CD4-positive, alpha-beta memory T cell (primary cell): ENCODE measurements at regions of chr9 and their contacts with region 1.

Region 1: DNA sequence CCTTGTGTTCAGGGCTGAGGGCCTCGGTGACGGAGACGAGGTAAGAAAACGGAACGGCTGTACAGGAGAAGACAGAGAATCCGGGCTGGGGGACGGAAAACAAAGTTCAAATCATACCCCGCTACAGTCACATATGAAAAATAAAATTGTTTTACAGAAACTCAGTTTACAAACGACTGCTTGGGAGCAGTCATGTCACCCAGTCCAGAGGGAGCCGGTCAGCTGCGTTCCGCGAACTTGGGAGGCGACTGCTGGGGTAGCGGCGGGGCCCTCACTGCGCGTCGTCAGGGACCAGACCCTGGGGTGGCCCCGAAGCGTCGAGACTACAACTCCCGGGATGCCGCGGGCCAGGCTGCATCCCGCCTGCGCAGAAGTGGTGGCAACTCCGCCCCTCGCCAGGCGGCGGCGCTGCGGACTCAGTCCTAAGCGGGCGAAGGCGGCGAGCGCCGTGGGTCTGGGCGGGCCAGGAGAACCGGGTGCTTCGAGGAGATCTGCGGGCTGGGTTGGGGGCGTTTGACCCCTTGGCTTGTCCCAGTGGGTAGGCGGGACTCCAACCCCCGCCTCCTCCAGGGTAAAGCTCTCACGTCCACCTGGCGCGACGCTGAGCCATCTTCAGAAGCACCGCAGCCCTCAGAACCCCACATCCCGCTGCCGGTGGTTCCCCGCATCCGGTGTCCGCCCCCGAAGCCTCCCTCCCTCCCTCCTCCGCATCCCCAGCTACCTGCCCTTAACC is 4.0 kb downstream of the SIT1 start:
- DNase-seq: peak; percentile 91 to 95 (median 91)
- H3K4me3 ChIP-seq: peak overlapping the region; percentile 78 to 96
- H3K4me3 Mint-ChIP-seq: peak overlapping the region; percentile 93 to 98 (median 94)
- H3K27ac ChIP-seq: peak overlapping the region; percentile 88
- H3K27ac Mint-ChIP-seq: peak overlapping the region; percentile 89 to 99 (median 97)
- H3K4me1 ChIP-seq: peaks cover 56% of the 10 kb centered on the region
- H3K4me1 Mint-ChIP-seq: peaks cover 29 to 87% (median 47%) of the 10 kb centered on the region in 4 donors
- H3K27me3 ChIP-seq: no peaks in the 10 kb centered on the region
- H3K27me3 Mint-ChIP-seq: no peaks in the 10 kb centered on the region

Region 2: DNA sequence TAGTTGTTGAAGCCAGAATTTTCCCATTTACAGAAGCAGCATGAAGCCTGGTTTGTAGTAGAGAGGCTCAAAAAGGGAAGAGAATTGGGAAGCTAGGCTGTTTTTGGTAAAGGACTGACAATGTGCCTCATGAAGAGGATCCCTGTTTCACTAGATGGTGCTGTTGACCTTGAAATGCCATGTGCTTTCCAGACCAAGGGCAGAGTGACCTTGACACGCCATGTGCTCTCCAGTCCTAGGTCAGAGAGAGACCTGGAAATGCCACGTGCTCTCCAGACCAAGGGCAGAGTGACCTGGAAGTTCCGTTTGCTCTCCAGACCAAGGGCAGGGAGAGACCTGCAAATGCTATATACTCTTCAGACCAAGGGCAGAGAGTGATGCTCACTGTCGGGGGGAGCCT is 452.9 kb before region 1 on chr9:
- CTCF ChIA-PET with region 1: no interaction called
- POLR2A ChIA-PET with region 1: no interaction called
- intact Hi-C with region 1: no loop called
- DNase-seq: no peak
- H3K4me3 ChIP-seq: no peak overlapping the region
- H3K4me3 Mint-ChIP-seq: no peak overlapping the region
- H3K27ac ChIP-seq: no peak overlapping the region
- H3K27ac Mint-ChIP-seq: no peak overlapping the region
- H3K4me1 ChIP-seq: no peaks in the 10 kb centered on the region
- H3K4me1 Mint-ChIP-seq: no peaks in the 10 kb centered on the region
- H3K27me3 ChIP-seq: no peaks in the 10 kb centered on the region
- H3K27me3 Mint-ChIP-seq: peaks cover 2 to 4% of the 10 kb centered on the region in 2 donors

Region 3: GRCh38 chr9:35464141-35465025 is 182.3 kb before region 1 on chr9:
- CTCF ChIA-PET with region 1: no interaction called
- POLR2A ChIA-PET with region 1: no interaction called
- intact Hi-C with region 1: no loop called
- DNase-seq: no peak
- H3K4me3 ChIP-seq: no peak overlapping the region
- H3K4me3 Mint-ChIP-seq: no peak overlapping the region
- H3K27ac ChIP-seq: no peak overlapping the region
- H3K27ac Mint-ChIP-seq: no peak overlapping the region
- H3K4me1 ChIP-seq: no peaks in the 10 kb centered on the region
- H3K4me1 Mint-ChIP-seq: no peaks in the 10 kb centered on the region
- H3K27me3 ChIP-seq: no peaks in the 10 kb centered on the region
- H3K27me3 Mint-ChIP-seq: peaks cover 19 to 27% of the 10 kb centered on the region in 2 donors

Region 4: GRCh38 chr9:35611230-35611797 is 35.4 kb before region 1 on chr9:
- CTCF ChIA-PET with region 1: interaction called, 76 read pairs
- POLR2A ChIA-PET with region 1: interaction called, 148 read pairs
- intact Hi-C with region 1: no loop called
- DNase-seq: peak; percentile 45 to 63 (median 49)
- H3K4me3 ChIP-seq: no peak overlapping the region
- H3K4me3 Mint-ChIP-seq: peak overlapping the region in 1 of 8 donors; percentile 26
- H3K27ac ChIP-seq: no peak overlapping the region
- H3K27ac Mint-ChIP-seq: peak overlapping the region in 5 of 7 donors; percentile 4 to 83 (median 59)
- H3K4me1 ChIP-seq: peaks cover 19% of the 10 kb centered on the region
- H3K4me1 Mint-ChIP-seq: peaks cover 13 to 43% (median 20%) of the 10 kb centered on the region in 4 donors
- H3K27me3 ChIP-seq: no peaks in the 10 kb centered on the region
- H3K27me3 Mint-ChIP-seq: no peaks in the 10 kb centered on the region

Region 5: GRCh38 chr9:35636135-35636876 is 10.4 kb before region 1 on chr9:
- CTCF ChIA-PET with region 1: interaction called, 7 read pairs
- POLR2A ChIA-PET with region 1: interaction called, 11 read pairs
- intact Hi-C with region 1: no loop called
- DNase-seq: peak in 1 of 5 donors; percentile 33
- H3K4me3 ChIP-seq: no peak overlapping the region
- H3K4me3 Mint-ChIP-seq: peak overlapping the region in 3 of 8 donors; percentile 22 to 60 (median 43)
- H3K27ac ChIP-seq: no peak overlapping the region
- H3K27ac Mint-ChIP-seq: peak overlapping the region in 6 of 7 donors; percentile 6 to 71 (median 38)
- H3K4me1 ChIP-seq: peaks cover 32% of the 10 kb centered on the region
- H3K4me1 Mint-ChIP-seq: peaks cover 22 to 56% (median 41%) of the 10 kb centered on the region in 4 donors
- H3K27me3 ChIP-seq: no peaks in the 10 kb centered on the region
- H3K27me3 Mint-ChIP-seq: no peaks in the 10 kb centered on the region

Region 6: DNA sequence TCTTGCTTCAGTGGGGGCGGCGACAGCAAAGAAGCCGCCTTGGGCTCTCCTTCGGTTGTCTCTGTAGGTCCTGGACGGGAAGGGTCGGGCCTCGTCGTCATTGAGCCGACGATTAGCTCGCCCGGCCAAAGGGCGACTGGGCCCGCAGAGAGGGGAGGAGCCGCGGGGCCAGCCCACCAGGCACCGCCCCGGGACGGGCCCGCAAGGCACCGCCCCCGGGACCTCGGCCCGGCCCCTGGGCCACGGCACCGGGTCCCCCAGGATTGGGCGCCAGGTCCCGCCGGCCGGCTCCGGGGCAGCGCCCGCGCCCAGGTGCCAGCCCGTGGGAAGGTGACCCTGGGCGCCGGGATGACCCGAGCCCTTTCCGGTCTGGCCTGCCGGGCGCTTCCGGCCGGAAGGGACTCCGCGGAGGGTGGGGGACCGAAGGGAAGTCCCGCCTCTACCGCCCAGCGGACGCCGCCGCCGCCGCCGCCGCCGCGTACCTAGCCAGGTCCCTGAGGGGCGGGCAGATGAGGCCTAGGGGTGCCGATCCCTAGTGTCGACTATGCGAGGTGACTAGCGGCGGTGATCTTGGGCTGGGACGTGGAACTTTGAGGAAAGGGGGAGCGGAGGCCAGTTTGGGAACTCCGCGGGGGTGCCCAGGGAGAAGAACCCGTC is 102.3 kb after region 1 on chr9 and contains the starts of genes GBA2 and RGP1:
- CTCF ChIA-PET with region 1: interaction called, 28 read pairs
- POLR2A ChIA-PET with region 1: interaction called, 42 read pairs
- intact Hi-C with region 1: loop called (anchors 1 kb)
- DNase-seq: peak; percentile 50 to 71 (median 62)
- H3K4me3 ChIP-seq: peak within 1 kb of the TSS; percentile 89 to 92
- H3K4me3 Mint-ChIP-seq: peak within 1 kb of the TSS; percentile 92 to 97 (median 94)
- H3K27ac ChIP-seq: peak within 1 kb of the TSS; percentile 82
- H3K27ac Mint-ChIP-seq: peak within 1 kb of the TSS; percentile 87 to 97 (median 96)
- H3K4me1 ChIP-seq: peaks cover 45% of the 10 kb centered on the region
- H3K4me1 Mint-ChIP-seq: peaks cover 37 to 73% (median 51%) of the 10 kb centered on the region in 4 donors
- H3K27me3 ChIP-seq: no peaks in the 10 kb centered on the region
- H3K27me3 Mint-ChIP-seq: no peaks in the 10 kb centered on the region
- total RNA-seq, gene GBA2: 61.1 to 66.3 TPM
- total RNA-seq, gene RGP1: 31.8 to 33.8 TPM

Region 7: DNA sequence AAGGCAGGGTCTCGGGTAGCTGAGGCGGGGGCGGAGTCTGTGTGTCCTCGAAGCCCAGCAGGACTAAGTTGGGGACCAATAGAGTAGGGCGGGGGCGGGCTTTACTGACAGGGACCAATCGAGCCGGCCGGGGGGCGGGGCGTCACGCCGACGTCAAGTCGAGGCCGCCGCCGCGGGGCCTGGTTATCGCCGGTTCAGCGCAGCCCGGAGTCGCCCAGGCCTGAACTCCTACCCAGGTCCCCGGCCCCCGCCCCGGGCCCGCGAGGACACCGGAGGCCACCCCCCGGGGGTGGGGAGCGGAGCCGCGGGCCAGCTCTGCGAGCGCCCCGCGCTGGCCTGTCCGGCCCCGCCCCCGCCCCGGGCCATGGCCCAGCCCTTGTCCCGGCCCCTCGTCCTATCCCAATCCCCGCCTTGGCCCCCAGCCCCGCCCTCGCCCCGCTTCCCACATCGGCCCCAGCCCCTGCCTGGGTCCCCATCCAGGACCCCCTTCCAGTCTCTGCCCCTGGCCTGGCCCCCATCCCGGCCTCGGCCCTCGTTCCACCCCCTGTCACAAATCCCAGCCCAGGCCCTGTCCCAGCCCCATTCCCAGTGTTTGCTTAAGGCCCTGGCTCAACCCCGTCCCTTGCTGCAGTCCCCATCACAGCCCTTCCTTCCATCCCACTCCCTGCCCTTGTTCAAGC is 182.5 kb after region 1 on chr9 and contains the start of gene TMEM8B:
- CTCF ChIA-PET with region 1: no interaction called
- POLR2A ChIA-PET with region 1: no interaction called
- intact Hi-C with region 1: loop called (anchors 1 kb)
- DNase-seq: peak; percentile 85 to 96 (median 88)
- H3K4me3 ChIP-seq: peak within 1 kb of the TSS; percentile 61 to 70
- H3K4me3 Mint-ChIP-seq: peak within 1 kb of the TSS; percentile 92 to 100 (median 96)
- H3K27ac ChIP-seq: peak within 1 kb of the TSS; percentile 66
- H3K27ac Mint-ChIP-seq: peak within 1 kb of the TSS; percentile 74 to 99 (median 98)
- H3K4me1 ChIP-seq: peaks cover 20% of the 10 kb centered on the region
- H3K4me1 Mint-ChIP-seq: peaks cover 23 to 39% (median 35%) of the 10 kb centered on the region in 4 donors
- H3K27me3 ChIP-seq: no peaks in the 10 kb centered on the region
- H3K27me3 Mint-ChIP-seq: no peaks in the 10 kb centered on the region
- total RNA-seq, gene TMEM8B: 7.4 to 10.5 TPM

Region 8: GRCh38 chr9:35962126-35962906 is 315.6 kb after region 1 on chr9:
- CTCF ChIA-PET with region 1: no interaction called
- POLR2A ChIA-PET with region 1: no interaction called
- intact Hi-C with region 1: no loop called
- DNase-seq: no peak
- H3K4me3 ChIP-seq: no peak overlapping the region
- H3K4me3 Mint-ChIP-seq: no peak overlapping the region
- H3K27ac ChIP-seq: no peak overlapping the region
- H3K27ac Mint-ChIP-seq: no peak overlapping the region
- H3K4me1 ChIP-seq: no peaks in the 10 kb centered on the region
- H3K4me1 Mint-ChIP-seq: no peaks in the 10 kb centered on the region
- H3K27me3 ChIP-seq: peaks cover 3% of the 10 kb centered on the region
- H3K27me3 Mint-ChIP-seq: peaks cover 3 to 9% of the 10 kb centered on the region in 2 donors